ENCODE measurements at regions of chr1 and their contacts with region 1.

Region 1: GRCh38 chr1:93629099-93630059 is 52.3 kb downstream of the BCAR3 start:
- H3K4me3 ChIP-seq: no peak overlapping the region
- H3K27ac ChIP-seq: no peak overlapping the region
- H3K4me1 ChIP-seq: 0 out of 2 replicates have a peak, but pooled peaks cover 2% of the 10 kb centered on the region
- CTCF ChIP-seq: 0 out of 2 replicates have a peak, but pooled peaks have one; percentile 17

Region 2: GRCh38 chr1:93447516-93448291 is 181.7 kb before region 1 on chr1 and contains the start of gene FNBP1L:
- CTCF ChIA-PET with region 1: interaction called, 4 read pairs
- POLR2A ChIA-PET with region 1: interaction called, 10 read pairs
- H3K4me3 ChIP-seq: peak within 1 kb of the TSS; percentile 98
- H3K27ac ChIP-seq: peak within 1 kb of the TSS; percentile 96
- H3K4me1 ChIP-seq: peaks cover 3% of the 10 kb centered on the region; the same call in 1 of the 2 replicates
- CTCF ChIP-seq: no peak

Region 3: DNA sequence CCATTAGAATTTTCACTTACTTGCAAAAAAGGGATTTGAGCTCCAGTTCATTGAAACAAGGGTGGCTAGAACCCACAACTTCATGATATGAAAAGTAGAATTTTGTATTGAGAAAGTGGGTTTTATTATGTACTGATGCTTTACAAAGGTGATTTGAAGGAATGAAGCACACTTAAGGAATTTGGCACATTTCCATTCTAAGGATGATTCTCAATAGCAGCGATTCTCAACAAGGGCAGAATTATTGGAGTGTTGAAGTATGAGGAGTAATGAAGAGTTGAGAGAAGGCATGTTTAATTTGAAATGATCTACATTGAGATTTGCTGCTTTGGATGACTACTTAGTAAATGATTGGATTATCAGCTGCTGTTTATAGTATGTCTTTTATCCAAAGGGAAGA is 126.8 kb before region 1 on chr1:
- CTCF ChIA-PET with region 1: no interaction called
- POLR2A ChIA-PET with region 1: no interaction called
- H3K4me3 ChIP-seq: no peak overlapping the region
- H3K27ac ChIP-seq: no peak overlapping the region
- H3K4me1 ChIP-seq: peaks cover 2% of the 10 kb centered on the region; the same call in 1 of the 2 replicates
- CTCF ChIP-seq: no peak

Region 4: GRCh38 chr1:93641527-93641926 is 12.1 kb after region 1 on chr1:
- CTCF ChIA-PET with region 1: interaction called, 11 read pairs
- POLR2A ChIA-PET with region 1: no interaction called
- H3K4me3 ChIP-seq: no peak overlapping the region
- H3K27ac ChIP-seq: no peak overlapping the region
- H3K4me1 ChIP-seq: peaks cover 4% of the 10 kb centered on the region; the same call in 1 of the 2 replicates
- CTCF ChIP-seq: no peak

Region 5: GRCh38 chr1:93672069-93672468 is 42.7 kb after region 1 on chr1:
- CTCF ChIA-PET with region 1: interaction called, 17 read pairs
- POLR2A ChIA-PET with region 1: no interaction called
- H3K4me3 ChIP-seq: no peak overlapping the region
- H3K27ac ChIP-seq: no peak overlapping the region
- H3K4me1 ChIP-seq: peaks cover 13% of the 10 kb centered on the region
- CTCF ChIP-seq: no peak

Region 6: DNA sequence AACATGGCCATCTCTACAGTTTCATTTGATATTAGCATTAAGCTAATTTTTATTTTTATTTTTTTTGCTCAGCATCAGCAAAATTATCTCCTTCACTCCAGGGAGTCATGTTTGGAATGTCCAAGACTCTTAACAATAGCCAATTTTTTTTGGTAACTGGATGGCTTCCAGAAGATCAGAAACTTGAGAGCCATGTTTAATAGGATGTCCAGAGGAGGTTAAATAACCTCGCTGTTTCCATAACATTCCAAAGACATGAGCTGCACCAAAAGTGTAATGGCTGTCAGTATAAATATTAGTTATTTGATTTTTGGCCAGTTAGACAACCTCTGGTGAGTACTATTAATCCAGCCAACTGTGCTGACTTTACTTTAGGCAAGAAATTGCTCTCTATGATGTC is 168.9 kb after region 1 on chr1:
- CTCF ChIA-PET with region 1: interaction called, 18 read pairs
- POLR2A ChIA-PET with region 1: no interaction called
- H3K4me3 ChIP-seq: no peak overlapping the region
- H3K27ac ChIP-seq: no peak overlapping the region
- H3K4me1 ChIP-seq: no peaks in the 10 kb centered on the region
- CTCF ChIP-seq: no peak

Region 7: GRCh38 chr1:93820554-93821426 is 191.4 kb after region 1 on chr1:
- CTCF ChIA-PET with region 1: interaction called, 309 read pairs
- POLR2A ChIA-PET with region 1: no interaction called
- H3K4me3 ChIP-seq: no peak overlapping the region
- H3K27ac ChIP-seq: no peak overlapping the region
- H3K4me1 ChIP-seq: peaks cover 7% of the 10 kb centered on the region; the same call in 1 of the 2 replicates
- CTCF ChIP-seq: no peak

Region 8: GRCh38 chr1:93846211-93846991 is 217.0 kb after region 1 on chr1:
- CTCF ChIA-PET with region 1: interaction called, 61 read pairs
- POLR2A ChIA-PET with region 1: interaction called, 6 read pairs
- H3K4me3 ChIP-seq: peak overlapping the region; percentile 88
- H3K27ac ChIP-seq: peak overlapping the region; percentile 91
- H3K4me1 ChIP-seq: peaks cover 3% of the 10 kb centered on the region; the same call in 1 of the 2 replicates
- CTCF ChIP-seq: peak; percentile 67

Measured in HEK293 (cell line).